ENCODE measurements at regions of chr2 and their contacts with region 1.

Region 1: DNA sequence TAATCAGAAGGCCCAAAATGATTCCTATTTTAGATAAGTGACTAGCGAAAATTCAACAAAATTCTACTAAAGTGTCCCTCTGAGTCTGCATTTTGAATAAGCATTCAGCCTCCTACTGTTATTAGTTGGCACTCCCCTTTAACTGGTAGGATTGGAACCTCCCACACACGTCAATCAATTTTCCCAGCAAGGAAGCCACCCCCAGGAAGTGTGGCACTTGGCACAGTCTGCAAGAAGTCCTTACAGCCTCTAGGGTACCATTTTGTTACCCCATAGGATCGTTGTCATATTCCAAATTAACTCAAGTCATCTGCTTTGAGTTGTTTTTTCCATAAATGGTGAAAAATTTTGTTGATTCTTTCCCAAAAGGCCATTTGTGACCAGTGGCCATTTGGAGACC is 33.8 kb upstream of the POU3F3 start:
- DNase-seq: no peak
- H3K4me3 ChIP-seq: no peak overlapping the region
- CTCF ChIP-seq: no peak

Region 2: DNA sequence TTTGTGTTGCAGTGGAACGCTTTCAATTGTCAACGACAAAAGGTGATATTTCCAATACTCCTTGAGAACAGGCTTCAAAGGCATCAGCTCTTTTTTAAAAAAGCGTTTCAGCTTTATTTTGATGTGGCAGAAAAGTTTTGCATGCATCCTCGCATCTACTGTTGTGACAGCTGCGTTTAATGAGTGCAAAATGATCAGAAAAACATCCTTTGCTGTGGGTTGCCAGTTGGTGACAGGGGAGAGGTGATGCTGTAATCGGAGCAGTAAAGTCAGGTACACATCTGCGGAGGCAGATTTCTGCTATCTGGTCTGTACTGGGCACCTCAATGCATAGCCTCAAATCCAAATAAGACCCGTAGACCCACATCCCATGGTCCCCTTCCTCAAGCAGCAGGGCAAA is 58.1 kb before region 1 on chr2:
- in situ Hi-C with region 1: loop called (anchors 5 kb)
- DNase-seq: no peak
- H3K4me3 ChIP-seq: no peak overlapping the region
- CTCF ChIP-seq: no peak

Region 3: GRCh38 chr2:104872866-104873688 is 53.0 kb after region 1 on chr2:
- in situ Hi-C with region 1: no loop called
- DNase-seq: no peak
- H3K4me3 ChIP-seq: peak overlapping the region; percentile 52
- CTCF ChIP-seq: peak; percentile 84

Measured in astrocyte of the cerebellum (primary cell).